PC-3 (cell line): ENCODE measurements at regions of chr11 and their contacts with region 1.

Region 1: DNA sequence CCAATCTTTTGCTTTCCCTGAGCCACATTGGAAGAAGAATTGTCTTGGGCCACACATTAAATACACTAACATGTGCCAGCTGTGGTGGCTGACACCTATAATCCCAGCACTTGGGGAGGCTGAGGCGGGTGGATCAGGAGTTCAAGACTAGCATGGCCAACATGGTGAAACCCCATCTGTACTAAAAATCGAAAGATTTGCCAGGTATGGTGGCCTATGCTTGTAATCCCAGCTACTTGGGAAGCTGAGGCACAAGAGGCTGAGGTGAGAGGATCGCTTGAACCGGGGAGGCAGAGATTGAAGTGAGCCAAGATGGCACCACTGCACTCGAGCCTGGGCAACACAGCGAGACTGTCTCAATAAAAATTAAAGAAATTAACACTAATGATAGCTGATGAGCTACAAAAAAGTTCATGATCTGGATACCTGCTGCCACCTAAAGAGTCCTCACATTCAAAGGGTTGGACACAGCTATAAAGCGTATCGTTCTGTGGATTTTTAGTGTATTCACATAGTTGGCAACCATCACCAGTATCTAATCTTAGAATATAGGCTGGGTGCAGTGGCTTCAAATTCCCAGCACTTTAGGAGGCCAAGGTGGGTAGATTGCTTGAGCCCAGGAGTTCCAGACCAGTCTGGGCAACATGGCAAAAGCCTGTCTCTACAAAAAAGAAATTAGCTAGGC is 3.4 kb upstream of the LDHC start:
- DNase-seq: peak; percentile 18
- ATAC-seq: peak; percentile 7
- H3K4me3 ChIP-seq: no peak overlapping the region
- H3K27ac ChIP-seq: peak overlapping the region; percentile 69
- H3K4me1 ChIP-seq: peaks cover 26% of the 10 kb centered on the region
- H3K27me3 ChIP-seq: no peaks in the 10 kb centered on the region
- CTCF ChIP-seq: no peak

Region 2: DNA sequence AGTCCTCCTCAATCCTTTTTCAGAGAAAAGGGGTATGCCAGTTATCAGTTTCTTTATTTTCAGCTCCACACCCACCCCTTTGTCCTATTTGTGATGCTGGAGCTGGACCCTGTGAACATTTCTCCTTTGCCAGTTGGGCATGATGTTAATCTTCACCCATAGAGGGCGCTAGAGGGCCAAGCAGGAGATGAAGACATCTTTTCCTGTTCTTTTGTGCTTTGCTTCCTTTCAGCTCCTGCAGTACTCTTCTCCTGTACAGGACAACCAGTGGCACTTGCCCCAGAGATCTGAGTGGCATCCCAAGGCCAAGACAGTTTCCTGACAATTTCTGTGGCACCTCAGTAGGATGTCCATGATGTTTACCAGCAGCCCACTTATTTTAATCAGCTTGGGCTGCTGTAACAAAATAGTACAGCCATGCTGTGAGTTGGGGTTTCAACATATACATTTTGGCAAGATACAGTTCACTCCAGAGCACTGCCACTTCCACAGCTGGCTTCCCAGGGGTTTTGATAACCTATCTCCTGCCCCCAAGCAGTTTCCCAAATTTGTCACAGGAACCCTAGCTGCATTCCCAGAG is 164.8 kb before region 1 on chr11:
- CTCF ChIA-PET with region 1: no interaction called
- POLR2A ChIA-PET with region 1: no interaction called
- intact Hi-C with region 1: loop called (anchors 10 kb)
- DNase-seq: peak; percentile 73
- ATAC-seq: peak; percentile 74
- H3K4me3 ChIP-seq: no peak overlapping the region
- H3K27ac ChIP-seq: no peak overlapping the region
- H3K4me1 ChIP-seq: no peaks in the 10 kb centered on the region
- H3K27me3 ChIP-seq: peaks cover 18% of the 10 kb centered on the region; the same call in 1 of the 2 replicates
- CTCF ChIP-seq: peak; percentile 86

Region 3: DNA sequence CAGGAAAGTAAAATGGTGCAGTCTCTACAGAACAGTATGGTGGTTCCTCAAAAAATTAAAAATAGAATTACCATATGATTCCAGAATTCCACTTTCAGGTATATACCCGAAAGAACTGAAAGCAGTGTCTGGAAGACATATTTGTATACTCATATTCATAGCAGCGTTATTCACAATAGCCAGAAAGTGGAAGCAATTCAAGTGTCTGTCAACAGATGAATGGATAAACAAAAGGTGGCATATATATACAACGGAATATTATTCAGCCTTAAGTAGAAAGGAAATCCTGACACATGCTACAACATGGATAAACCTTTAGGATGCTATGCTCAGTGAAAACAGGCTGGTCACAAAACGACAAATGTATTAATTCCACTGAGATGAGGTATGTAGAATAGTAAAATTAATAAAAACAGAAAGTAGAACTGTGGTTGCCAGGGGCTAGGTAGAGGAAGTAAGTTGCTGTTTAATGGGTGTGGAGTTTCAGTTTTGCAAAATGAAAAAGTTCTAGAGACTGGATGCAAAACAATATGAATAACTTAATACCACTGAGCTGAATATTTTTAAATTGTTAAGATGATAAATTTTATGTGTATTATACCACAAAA is 128.2 kb before region 1 on chr11:
- CTCF ChIA-PET with region 1: no interaction called
- POLR2A ChIA-PET with region 1: no interaction called
- intact Hi-C with region 1: no loop called
- DNase-seq: no peak
- ATAC-seq: no peak
- H3K4me3 ChIP-seq: no peak overlapping the region
- H3K27ac ChIP-seq: no peak overlapping the region
- H3K4me1 ChIP-seq: no peaks in the 10 kb centered on the region
- H3K27me3 ChIP-seq: no peaks in the 10 kb centered on the region
- CTCF ChIP-seq: no peak

Region 4: DNA sequence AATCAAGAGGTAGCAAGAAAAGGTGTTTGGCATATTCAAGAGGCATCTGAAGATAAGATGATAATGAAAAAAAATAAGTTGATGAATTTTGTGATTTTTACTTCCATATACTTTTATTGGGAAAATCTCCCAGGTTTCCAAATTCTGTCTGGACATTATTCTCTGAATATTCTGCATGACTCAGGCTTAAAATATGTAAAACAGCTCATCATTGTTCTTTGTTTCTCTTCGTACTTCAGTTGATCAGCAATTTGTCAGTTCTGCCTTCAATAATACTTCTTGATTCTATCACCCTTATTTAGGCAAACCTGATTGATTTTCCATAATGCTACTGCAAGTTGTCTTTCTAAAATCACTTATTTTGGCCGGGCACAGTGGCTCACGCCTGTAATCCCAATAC is 56.1 kb before region 1 on chr11:
- CTCF ChIA-PET with region 1: no interaction called
- POLR2A ChIA-PET with region 1: no interaction called
- intact Hi-C with region 1: no loop called
- DNase-seq: peak; percentile 48
- ATAC-seq: no peak
- H3K4me3 ChIP-seq: no peak overlapping the region
- H3K27ac ChIP-seq: no peak overlapping the region
- H3K4me1 ChIP-seq: peaks cover 16% of the 10 kb centered on the region
- H3K27me3 ChIP-seq: no peaks in the 10 kb centered on the region
- CTCF ChIP-seq: no peak

Region 5: DNA sequence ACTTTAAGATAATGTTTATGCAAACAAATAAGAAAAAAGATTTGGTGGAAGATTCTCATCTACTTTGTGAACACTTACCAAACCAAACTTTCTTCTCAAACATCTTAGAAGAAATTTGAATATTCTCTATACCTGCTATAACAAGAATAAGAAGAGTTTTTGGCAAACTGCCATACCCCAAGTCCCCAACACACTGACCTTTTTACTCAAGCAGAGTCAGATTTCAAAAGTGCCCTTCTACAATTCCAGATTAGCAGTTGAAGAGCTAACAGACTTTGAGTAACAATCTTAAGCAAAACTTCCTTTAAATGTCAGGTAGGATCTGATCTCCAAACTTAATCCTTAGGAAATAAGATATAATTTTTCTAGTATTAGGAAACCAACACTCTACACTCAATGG is 84.2 kb after region 1 on chr11:
- CTCF ChIA-PET with region 1: interaction called, 7 read pairs
- POLR2A ChIA-PET with region 1: no interaction called
- intact Hi-C with region 1: loop called (anchors 5 kb)
- DNase-seq: peak; percentile 52
- ATAC-seq: peak; percentile 10
- H3K4me3 ChIP-seq: peak overlapping the region; percentile 33
- H3K27ac ChIP-seq: peak overlapping the region; percentile 87
- H3K4me1 ChIP-seq: peaks cover 62% of the 10 kb centered on the region
- H3K27me3 ChIP-seq: no peaks in the 10 kb centered on the region
- CTCF ChIP-seq: no peak